ENCODE measurements at regions of chr15 and their contacts with region 1.

Region 1: DNA sequence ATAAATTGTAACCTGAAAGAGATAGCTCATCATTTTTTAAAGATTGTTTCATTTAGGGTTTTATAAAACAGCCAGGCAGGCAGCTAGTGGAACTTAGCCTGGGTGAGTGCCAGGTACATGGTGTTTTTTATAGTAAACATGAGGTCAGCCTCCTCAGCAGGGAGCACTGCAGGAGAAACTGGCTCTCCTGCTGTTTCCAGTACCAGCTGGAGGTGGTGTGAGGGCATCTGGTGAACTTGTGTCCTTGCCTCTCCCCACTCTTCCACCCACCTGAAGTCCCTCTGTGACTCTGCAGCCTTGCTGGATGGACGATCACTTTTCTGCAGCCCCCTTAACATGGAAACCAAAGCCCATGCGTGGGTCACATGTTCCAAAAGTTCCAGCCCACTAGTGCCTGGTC is 128.4 kb downstream of the FAM174B start:
- DNase-seq: peak in 4 of 5 donors; percentile 43 to 72 (median 68)
- ATAC-seq: peak; percentile 89 to 98 (median 93)
- H3K4me3 ChIP-seq: no peak overlapping the region
- H3K27ac ChIP-seq: peak overlapping the region in 6 of 12 donors; percentile 25 to 54 (median 30)
- H3K4me1 ChIP-seq: peaks cover 0 to 5% (median 0%) of the 10 kb centered on the region in 12 donors
- H3K27me3 ChIP-seq: no peaks in the 10 kb centered on the region
- CTCF ChIP-seq: no peak
- POLR2A ChIP-seq: no peak

Region 2: DNA sequence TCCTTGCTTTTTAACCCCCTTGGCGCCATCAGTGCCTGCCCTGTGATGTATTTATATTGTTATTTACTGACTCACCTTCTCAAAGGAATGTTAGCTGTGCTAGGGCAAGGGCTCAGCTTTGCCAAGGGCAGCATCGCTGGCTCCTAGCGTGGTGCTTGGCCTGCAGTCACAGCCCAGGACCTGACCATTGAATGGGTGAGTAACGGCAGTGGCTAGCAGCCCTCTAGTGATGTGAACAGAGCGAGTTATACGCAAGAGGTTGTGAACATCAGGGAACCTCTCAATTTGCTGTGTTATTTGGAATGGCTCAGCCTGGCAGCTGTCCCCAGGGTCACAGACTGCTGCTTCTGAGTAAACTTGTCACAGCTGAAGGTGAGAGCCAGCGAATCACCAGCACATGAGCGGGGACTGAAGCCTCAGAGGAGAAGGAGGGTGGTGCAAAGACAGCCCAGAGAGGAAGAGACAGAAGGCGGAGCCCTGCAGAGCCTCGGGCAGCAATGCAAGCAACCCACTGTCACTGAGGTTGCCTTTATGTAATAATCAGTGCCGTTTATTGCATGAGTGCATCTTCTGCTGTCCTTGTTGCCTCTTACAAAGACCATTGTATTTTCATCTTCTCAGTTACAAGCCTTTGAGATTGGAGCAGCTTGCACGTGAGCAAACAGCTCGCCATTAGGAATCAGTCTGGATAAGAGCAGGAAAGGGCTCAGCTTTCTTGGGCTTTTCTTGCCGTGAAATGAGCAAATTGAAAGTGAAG is 515.4 kb before region 1 on chr15:
- intact Hi-C with region 1: no loop called
- DNase-seq: peak in 3 of 5 donors; percentile 52 to 66 (median 61)
- ATAC-seq: peak in 3 of 4 donors; percentile 62 to 84 (median 79)
- H3K4me3 ChIP-seq: peak overlapping the region in 6 of 12 donors; percentile 4 to 38 (median 14)
- H3K27ac ChIP-seq: peak overlapping the region in 9 of 12 donors; percentile 4 to 80 (median 57)
- H3K4me1 ChIP-seq: peaks cover 10 to 67% (median 55%) of the 10 kb centered on the region in 12 donors
- H3K27me3 ChIP-seq: no peaks in the 10 kb centered on the region
- CTCF ChIP-seq: no peak
- POLR2A ChIP-seq: no peak

Region 3: GRCh38 chr15:92545996-92546395 is 18.8 kb after region 1 on chr15:
- intact Hi-C with region 1: loop called in 1 of 10 experiments (anchors 2 kb)
- DNase-seq: no peak
- ATAC-seq: no peak
- H3K4me3 ChIP-seq: no peak overlapping the region
- H3K27ac ChIP-seq: no peak overlapping the region
- H3K4me1 ChIP-seq: peaks cover 0 to 8% (median 0%) of the 10 kb centered on the region in 12 donors
- H3K27me3 ChIP-seq: peaks cover 0 to 3% (median 0%) of the 10 kb centered on the region in 9 donors
- CTCF ChIP-seq: no peak
- POLR2A ChIP-seq: no peak

Region 4: DNA sequence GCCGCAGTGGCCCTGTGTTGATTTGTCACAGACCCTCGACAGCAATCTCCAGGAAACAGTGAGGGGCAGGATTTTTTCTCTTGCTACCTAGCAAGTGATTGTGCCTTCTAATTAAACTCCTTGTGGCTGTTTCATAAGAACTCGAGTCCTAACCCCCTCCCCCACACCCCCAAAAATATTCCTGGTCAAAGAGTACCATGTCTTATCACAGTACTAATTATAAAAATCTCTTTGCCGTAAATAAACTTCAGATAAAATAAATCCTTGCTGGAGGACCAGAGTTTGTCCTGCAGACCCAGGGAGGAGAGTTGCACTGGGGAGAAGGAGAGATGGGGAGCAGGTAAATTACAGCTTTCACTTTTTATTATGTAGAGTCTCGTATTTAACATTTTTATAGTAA is 64.1 kb after region 1 on chr15:
- intact Hi-C with region 1: loop called in 5 of 10 experiments (anchors 5 to 10 kb)
- DNase-seq: no peak
- ATAC-seq: peak in 2 of 4 donors; percentile 45 to 63
- H3K4me3 ChIP-seq: peak overlapping the region in 6 of 12 donors; percentile 5 to 53 (median 14)
- H3K27ac ChIP-seq: peak overlapping the region in 1 of 12 donors; percentile 41
- H3K4me1 ChIP-seq: peaks cover 0 to 41% (median 0%) of the 10 kb centered on the region in 12 donors
- H3K27me3 ChIP-seq: peaks cover 0 to 4% (median 0%) of the 10 kb centered on the region in 9 donors
- CTCF ChIP-seq: no peak
- POLR2A ChIP-seq: no peak

Region 5: GRCh38 chr15:92665100-92665555 is 137.9 kb after region 1 on chr15:
- intact Hi-C with region 1: loop called in 1 of 10 experiments (anchors 2 kb)
- DNase-seq: peak in 1 of 5 donors; percentile 49
- ATAC-seq: peak; percentile 56 to 71 (median 62)
- H3K4me3 ChIP-seq: peak overlapping the region in 6 of 12 donors; percentile 4 to 38 (median 21)
- H3K27ac ChIP-seq: peak overlapping the region in 10 of 12 donors; percentile 21 to 79 (median 36)
- H3K4me1 ChIP-seq: peaks cover 10 to 46% (median 32%) of the 10 kb centered on the region in 12 donors
- H3K27me3 ChIP-seq: no peaks in the 10 kb centered on the region
- CTCF ChIP-seq: no peak
- POLR2A ChIP-seq: no peak

Measured in heart left ventricle (tissue), 16 donors.